CD8-positive, alpha-beta T cell (primary cell): ENCODE measurements at regions of chr2 and their contacts with region 1.

Region 1: GRCh38 chr2:143162123-143162837 is 33.1 kb downstream of the ARHGAP15 start:
- DNase-seq: peak; percentile 22 to 85 (median 62)
- ATAC-seq: peak; percentile 99
- H3K4me3 ChIP-seq: no peak overlapping the region
- H3K4me3 Mint-ChIP-seq: no peak overlapping the region
- H3K27ac ChIP-seq: no peak overlapping the region
- H3K27ac Mint-ChIP-seq: peak overlapping the region; percentile 87
- H3K4me1 ChIP-seq: peaks cover 64% of the 10 kb centered on the region
- H3K4me1 Mint-ChIP-seq: peaks cover 88% of the 10 kb centered on the region
- H3K27me3 ChIP-seq: no peaks in the 10 kb centered on the region
- H3K27me3 Mint-ChIP-seq: no peaks in the 10 kb centered on the region
- CTCF ChIP-seq: peak; percentile 77

Region 2: DNA sequence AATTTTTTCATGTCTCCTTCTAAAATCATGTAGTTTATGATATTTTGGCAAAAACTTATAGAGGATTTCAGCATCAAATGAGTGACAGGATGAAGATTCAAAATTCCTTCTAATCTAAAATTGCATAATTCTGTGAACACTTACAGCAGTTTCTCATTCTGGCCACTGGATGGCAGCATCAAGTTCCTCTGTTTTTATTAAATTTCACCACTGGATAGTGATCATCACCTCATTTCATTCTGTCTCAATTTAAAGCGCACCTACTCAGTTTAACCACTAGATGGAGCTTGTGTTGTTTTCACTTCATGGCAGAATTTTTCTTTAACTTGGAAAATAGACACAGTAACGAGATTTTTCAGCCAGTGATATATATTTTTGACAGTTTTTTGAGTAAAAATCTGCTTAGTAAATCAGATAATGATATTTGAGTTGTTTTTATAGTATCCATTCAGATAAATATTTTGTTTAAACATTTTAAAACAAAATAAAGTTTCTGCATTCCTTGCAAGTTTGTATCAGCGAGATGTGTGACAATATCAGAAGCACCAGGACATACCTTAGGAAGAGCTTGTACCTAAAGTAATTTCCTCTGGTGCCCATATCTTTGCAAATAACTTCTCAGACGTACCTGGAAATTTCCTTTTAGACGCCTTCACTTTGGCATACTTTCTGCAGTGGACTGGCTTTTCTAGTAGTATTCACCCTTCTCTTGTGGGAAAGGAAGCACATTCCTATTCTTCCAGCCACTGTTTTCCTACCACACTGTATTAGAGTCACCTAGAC is 127.8 kb before region 1 on chr2:
- CTCF ChIA-PET with region 1: interaction called, 5 read pairs
- POLR2A ChIA-PET with region 1: no interaction called
- intact Hi-C with region 1: loop called in 1 of 2 experiments (anchors 1 kb)
- DNase-seq: peak in 8 of 9 experiments; percentile 32 to 88 (median 56)
- ATAC-seq: peak; percentile 100
- H3K4me3 ChIP-seq: no peak overlapping the region
- H3K4me3 Mint-ChIP-seq: no peak overlapping the region
- H3K27ac ChIP-seq: no peak overlapping the region
- H3K27ac Mint-ChIP-seq: no peak overlapping the region
- H3K4me1 ChIP-seq: no peaks in the 10 kb centered on the region
- H3K4me1 Mint-ChIP-seq: no peaks in the 10 kb centered on the region
- H3K27me3 ChIP-seq: no peaks in the 10 kb centered on the region
- H3K27me3 Mint-ChIP-seq: peaks cover 6% of the 10 kb centered on the region
- CTCF ChIP-seq: peak; percentile 99

Region 3: DNA sequence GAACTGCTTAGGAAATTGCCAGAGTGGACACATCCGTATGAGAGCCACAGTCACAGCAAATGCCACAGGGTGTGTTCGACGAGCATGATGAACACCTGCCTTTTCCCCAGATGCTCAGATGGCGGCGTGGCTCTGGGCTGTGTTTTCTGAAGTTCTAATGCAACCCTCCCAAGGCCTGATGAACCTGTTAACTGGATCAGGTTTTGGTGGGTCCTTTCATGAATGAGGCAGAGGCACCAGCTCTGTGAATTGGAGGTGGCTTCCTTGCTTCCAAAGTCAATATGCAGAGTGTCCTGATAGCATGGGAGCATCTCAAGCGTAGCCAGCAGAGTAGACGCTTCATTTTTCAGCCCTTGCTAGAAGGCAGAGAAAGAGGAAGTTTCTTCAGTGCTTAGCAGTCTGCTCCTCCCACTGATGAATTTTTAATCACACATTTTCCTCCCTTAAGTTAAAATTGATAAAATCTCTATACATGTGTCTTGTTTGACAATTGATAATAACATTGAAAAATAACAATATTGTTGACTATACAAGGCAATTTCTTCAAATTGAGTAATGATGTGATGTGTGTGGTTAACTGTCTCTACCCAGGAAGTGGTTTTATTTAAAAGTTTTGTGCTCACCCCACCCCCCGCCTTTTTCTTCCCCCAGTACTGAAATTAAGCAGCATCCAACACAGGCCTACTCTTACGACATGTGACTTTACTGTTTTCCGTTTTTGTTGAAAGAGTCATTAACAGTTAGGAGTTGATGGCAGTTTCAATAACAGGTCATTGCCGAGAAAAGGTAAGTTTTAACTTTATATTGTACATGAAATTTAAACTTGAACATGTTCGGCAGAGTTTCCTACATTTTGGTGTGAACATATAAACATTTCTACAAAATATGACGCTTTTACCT is 33.3 kb before region 1 on chr2 and contains the start of gene ARHGAP15:
- CTCF ChIA-PET with region 1: interaction called, 30 read pairs
- POLR2A ChIA-PET with region 1: interaction called, 7 read pairs
- intact Hi-C with region 1: loop called (anchors 5 kb)
- DNase-seq: peak; percentile 34 to 93 (median 70)
- ATAC-seq: peak; percentile 84
- H3K4me3 ChIP-seq: peak within 1 kb of the TSS; percentile 48 to 62
- H3K4me3 Mint-ChIP-seq: peak within 1 kb of the TSS; percentile 82
- H3K27ac ChIP-seq: peak within 1 kb of the TSS; percentile 81 to 93
- H3K27ac Mint-ChIP-seq: peak within 1 kb of the TSS; percentile 99
- H3K4me1 ChIP-seq: peaks cover 62% of the 10 kb centered on the region
- H3K4me1 Mint-ChIP-seq: peaks cover 54% of the 10 kb centered on the region
- H3K27me3 ChIP-seq: no peaks in the 10 kb centered on the region
- H3K27me3 Mint-ChIP-seq: no peaks in the 10 kb centered on the region
- CTCF ChIP-seq: no peak
- total RNA-seq, gene ARHGAP15: 115 to 119 TPM

Region 4: DNA sequence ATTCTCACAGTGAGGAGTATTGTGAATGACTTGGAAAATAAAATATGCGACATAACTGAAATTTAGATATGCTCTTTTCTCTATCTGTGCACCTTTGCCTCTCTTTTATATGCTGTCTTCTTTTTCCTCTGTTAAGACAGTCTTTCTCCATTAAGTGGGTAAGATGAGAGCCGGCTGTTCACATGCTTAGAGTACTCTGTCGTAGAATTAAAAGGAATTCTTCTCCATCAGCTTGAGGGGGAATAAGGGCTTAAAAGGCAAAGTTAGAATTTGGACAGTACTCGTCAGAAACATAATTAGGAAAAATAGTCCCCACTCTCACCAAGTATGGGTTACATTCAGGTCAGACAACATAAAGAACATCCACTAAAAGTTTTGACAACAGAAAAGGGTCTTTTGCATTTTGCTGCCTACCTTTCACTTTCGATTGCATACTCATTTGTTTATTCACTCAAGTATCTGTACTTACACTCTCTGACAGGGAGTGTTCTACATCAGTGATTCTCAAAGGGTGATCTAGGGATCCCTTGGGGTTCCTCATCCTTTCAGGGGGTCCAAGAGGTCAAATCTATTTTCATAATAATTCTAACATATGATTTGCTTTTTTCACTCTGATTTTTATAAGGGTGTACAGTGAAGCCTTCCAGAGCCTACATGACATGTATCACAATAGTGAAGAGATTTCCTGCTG is 15.0 kb after region 1 on chr2:
- CTCF ChIA-PET with region 1: interaction called, 23 read pairs
- POLR2A ChIA-PET with region 1: no interaction called
- intact Hi-C with region 1: loop called in 1 of 2 experiments (anchors 1 kb)
- DNase-seq: peak in 2 of 9 experiments; percentile 32 to 62
- ATAC-seq: peak; percentile 67
- H3K4me3 ChIP-seq: peak overlapping the region; percentile 25 to 36
- H3K4me3 Mint-ChIP-seq: peak overlapping the region; percentile 86
- H3K27ac ChIP-seq: peak overlapping the region; percentile 48 to 75
- H3K27ac Mint-ChIP-seq: peak overlapping the region; percentile 100
- H3K4me1 ChIP-seq: peaks cover 35% of the 10 kb centered on the region
- H3K4me1 Mint-ChIP-seq: peaks cover 68% of the 10 kb centered on the region
- H3K27me3 ChIP-seq: no peaks in the 10 kb centered on the region
- H3K27me3 Mint-ChIP-seq: no peaks in the 10 kb centered on the region
- CTCF ChIP-seq: no peak

Region 5: DNA sequence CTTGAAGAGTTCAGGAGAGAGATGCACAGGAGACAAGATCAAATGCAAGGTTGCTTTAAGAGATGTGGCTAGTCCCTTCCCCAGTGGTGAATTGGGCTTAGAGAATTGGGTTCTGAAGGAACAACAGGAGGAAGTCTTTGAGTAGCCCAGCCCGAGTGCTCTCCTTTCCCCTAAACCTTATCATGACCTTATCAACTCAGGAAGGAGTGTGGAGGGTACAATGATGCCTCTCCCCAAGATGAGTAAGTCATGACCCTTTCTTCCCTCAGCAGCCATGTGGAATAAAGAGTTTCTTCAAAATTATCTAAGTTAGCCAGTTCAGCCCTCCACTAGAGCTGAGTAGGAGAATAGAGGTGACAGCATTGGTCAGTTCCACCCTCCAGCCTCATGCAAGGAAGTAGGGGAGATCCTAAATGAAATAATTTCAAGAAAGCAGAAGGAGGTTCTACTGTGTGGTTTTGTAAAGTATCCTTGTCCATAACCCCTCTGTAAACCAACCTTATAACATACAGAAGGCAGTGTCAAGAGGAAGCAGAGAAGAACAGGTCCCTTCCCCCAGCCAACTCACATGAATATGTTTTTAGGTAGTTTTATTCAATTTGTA is 55.3 kb after region 1 on chr2:
- CTCF ChIA-PET with region 1: interaction called, 23 read pairs
- POLR2A ChIA-PET with region 1: interaction called, 3 read pairs
- intact Hi-C with region 1: loop called (anchors 1 kb)
- DNase-seq: no peak
- ATAC-seq: no peak
- H3K4me3 ChIP-seq: no peak overlapping the region
- H3K4me3 Mint-ChIP-seq: no peak overlapping the region
- H3K27ac ChIP-seq: peak overlapping the region in 1 of 2 experiments; percentile 36
- H3K27ac Mint-ChIP-seq: peak overlapping the region; percentile 79
- H3K4me1 ChIP-seq: peaks cover 7% of the 10 kb centered on the region
- H3K4me1 Mint-ChIP-seq: peaks cover 54% of the 10 kb centered on the region
- H3K27me3 ChIP-seq: no peaks in the 10 kb centered on the region
- H3K27me3 Mint-ChIP-seq: no peaks in the 10 kb centered on the region
- CTCF ChIP-seq: no peak

Region 6: GRCh38 chr2:143284087-143284675 is 121.9 kb after region 1 on chr2:
- CTCF ChIA-PET with region 1: interaction called, 8 read pairs
- POLR2A ChIA-PET with region 1: no interaction called
- intact Hi-C with region 1: loop called in 1 of 2 experiments (anchors 1 kb)
- DNase-seq: peak in 4 of 9 experiments; percentile 12 to 73 (median 46)
- ATAC-seq: peak; percentile 88
- H3K4me3 ChIP-seq: no peak overlapping the region
- H3K4me3 Mint-ChIP-seq: no peak overlapping the region
- H3K27ac ChIP-seq: no peak overlapping the region
- H3K27ac Mint-ChIP-seq: no peak overlapping the region
- H3K4me1 ChIP-seq: no peaks in the 10 kb centered on the region
- H3K4me1 Mint-ChIP-seq: peaks cover 55% of the 10 kb centered on the region
- H3K27me3 ChIP-seq: no peaks in the 10 kb centered on the region
- H3K27me3 Mint-ChIP-seq: no peaks in the 10 kb centered on the region
- CTCF ChIP-seq: peak; percentile 77